Cardiac septum (tissue), 1 donor: ENCODE measurements at regions of chr10 and their contacts with region 1.

Region 1: DNA sequence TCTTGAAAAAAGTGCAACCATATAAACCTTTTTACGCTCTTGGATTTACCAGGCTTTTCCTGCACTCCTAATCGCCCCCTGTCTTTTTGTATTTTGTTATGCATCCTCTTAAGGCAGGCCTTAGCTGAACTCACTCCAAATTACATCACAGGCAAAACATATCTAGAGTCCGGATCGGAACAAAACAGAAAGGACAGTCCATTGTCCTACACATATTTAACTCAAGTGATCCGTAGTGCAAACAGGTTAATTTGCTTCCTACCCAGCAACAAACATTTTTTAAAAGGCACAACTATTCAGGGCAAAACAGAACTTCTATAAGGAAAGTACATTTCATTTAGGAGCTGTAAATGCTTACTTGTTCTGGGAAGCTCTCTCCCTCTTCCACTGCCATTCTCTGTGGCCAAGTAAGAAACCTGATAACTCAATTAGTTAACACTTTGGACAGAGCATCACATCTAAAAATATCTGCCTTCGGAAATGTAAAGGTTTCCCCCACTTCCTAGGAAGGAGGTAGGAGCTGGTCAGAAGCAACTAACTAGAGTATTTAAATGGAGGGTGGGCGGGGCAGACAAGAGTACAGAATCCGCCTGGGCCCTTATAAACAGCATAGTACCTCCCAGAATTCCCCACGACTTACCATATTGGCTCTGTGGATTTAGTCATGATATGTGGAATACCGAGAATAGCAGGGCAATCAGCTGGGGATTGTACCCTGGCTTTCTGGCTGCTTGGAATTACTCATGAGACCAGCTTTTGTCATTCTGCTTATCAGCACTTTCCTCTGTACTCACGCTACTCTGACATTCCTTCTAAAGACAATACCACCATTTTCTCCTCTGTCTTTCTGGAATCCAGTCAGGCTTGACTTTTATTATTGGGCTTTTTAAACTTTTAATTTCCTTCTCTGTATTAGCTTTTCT is 89.5 kb downstream of the ANK3 start:
- DNase-seq: no peak

Region 2: DNA sequence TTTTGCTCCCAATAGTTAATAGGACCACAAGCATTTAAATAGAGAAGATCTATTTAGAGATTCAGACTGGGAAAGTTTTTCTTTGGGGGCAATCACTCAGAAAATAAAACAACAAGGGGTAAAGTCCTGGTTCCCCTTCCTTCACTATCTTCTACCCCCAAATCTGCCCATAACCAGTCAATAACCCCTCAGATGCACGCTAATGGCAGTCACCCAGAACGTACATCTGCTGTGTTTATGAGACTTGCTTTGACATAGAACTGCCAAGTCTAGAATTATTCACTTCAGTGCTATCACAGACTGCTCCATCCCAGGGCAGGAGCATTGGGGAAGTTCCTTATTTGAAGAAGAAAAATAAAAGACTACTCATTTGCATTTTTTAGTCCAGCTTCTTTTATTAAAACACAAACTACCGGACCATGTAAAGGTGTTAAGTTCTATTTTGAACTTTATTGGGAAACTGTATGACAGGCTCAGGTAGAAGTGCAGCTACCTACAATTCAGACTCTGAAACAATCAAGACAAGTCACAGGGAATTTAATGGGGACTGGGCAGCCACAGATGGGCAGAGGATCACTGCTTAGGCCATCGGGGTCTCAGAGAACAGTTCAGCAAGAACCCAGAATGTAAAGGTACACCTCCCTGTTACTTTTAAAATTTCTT is 51.1 kb after region 1 on chr10:
- intact Hi-C with region 1: loop called (anchors 1 kb)
- DNase-seq: no peak

Region 3: GRCh38 chr10:60426400-60426799 is 126.2 kb after region 1 on chr10:
- intact Hi-C with region 1: loop called (anchors 10 kb)
- DNase-seq: no peak